Thyroid gland (tissue), 4 donors: ENCODE measurements at regions of chr5 and their contacts with region 1.

Region 1: GRCh38 chr5:72307968-72308852 is 11.8 kb downstream of the MRPS27 start:
- DNase-seq: peak; percentile 99
- H3K4me3 ChIP-seq: peak overlapping the region; percentile 58 to 86 (median 76)
- H3K27ac ChIP-seq: peak overlapping the region; percentile 91 to 97 (median 93)
- H3K4me1 ChIP-seq: peaks cover 7 to 8% of the 10 kb centered on the region in 2 donors
- H3K27me3 ChIP-seq: no peaks in the 10 kb centered on the region
- CTCF ChIP-seq: peak; percentile 49 to 98 (median 88)
- POLR2A ChIP-seq: peak; percentile 68 to 99

Region 2: DNA sequence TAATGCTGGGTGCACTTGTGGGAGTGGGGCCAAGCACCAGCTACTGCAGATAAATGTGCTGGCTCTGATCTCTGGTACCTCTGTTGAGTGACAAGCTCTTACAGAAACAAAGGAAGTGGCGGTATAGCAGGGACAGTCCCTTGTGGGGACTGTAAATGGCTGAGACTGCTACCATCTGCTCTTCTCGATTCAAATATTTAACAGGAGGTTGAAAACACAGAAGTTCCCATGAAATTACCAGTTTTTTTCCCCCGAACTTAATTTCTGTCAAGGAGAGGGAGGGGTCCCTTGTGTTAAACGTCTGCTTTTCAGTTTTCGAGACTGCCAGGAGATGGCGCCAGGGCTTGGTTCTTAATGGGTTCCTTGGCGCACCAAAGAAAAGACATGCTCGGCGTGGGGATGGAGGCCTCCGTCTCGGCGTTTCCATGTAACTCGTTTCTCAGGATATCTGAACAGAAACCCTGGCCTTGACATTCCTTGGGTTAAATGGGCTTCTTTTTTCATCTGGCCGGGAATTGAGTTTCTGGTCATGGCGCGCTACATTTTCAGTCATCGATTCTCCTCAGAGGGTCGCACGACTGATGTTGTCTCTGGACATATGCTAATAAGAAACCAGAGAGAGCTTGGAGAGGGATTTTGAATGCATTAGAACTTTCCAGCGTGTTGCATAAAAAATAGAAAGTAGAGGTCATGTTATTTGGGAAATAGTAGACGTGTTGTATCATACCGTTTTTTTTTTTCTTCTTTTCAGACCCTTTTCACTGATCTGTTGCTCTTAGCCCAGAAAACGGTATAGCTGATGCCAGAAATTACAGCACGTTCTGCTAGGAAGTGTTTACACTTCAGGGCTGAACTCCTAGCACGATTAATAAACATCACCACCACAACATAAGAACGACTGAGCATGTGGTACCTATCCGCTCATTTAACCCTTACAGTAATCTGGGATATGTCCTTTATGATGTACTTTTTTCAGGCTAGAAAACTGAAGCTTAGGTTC is 525.1 kb before region 1 on chr5:
- intact Hi-C with region 1: loop called (anchors 10 kb)
- DNase-seq: peak; percentile 70 to 81
- H3K4me3 ChIP-seq: no peak overlapping the region
- H3K27ac ChIP-seq: no peak overlapping the region
- H3K4me1 ChIP-seq: no peaks in the 10 kb centered on the region
- H3K27me3 ChIP-seq: no peaks in the 10 kb centered on the region
- CTCF ChIP-seq: peak; percentile 49 to 81 (median 69)
- POLR2A ChIP-seq: no peak

Region 3: DNA sequence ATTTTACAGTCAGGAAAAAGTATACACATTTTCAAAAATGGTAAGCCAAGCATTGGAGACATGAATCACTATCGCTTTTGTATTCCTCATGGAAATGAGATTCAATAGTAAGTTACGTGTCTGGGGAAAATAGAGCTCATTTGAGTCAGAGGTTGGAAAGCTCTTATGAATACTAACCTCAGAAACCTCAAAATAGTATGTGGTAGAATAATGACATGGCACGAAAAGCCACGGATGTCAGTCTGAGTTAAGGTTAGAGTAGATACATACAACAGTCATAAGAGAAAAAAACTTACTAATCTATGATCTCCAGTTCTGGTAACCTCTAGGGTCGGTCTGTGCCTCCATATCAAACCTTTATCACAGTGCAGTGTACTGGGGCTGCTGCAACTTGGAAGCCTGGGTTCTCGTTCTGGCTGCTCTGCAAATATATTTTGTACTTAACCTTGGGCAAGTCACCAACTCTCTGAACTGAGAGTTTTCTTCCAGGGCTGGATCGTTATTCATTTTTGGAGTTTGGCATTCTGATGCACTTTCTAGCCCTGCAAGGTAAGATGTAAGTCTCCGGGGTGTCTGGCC is 169.2 kb before region 1 on chr5:
- intact Hi-C with region 1: loop called (anchors 5 kb)
- DNase-seq: no peak
- H3K4me3 ChIP-seq: no peak overlapping the region
- H3K27ac ChIP-seq: no peak overlapping the region
- H3K4me1 ChIP-seq: no peaks in the 10 kb centered on the region
- H3K27me3 ChIP-seq: no peaks in the 10 kb centered on the region
- CTCF ChIP-seq: no peak
- POLR2A ChIP-seq: no peak